ENCODE measurements at regions of chr6 and their contacts with region 1.

Region 1: GRCh38 chr6:31952140-31952805 is 6.4 kb downstream of the CFB start:
- DNase-seq: peak in 8 of 10 donors; percentile 31 to 93 (median 56)

Region 2: DNA sequence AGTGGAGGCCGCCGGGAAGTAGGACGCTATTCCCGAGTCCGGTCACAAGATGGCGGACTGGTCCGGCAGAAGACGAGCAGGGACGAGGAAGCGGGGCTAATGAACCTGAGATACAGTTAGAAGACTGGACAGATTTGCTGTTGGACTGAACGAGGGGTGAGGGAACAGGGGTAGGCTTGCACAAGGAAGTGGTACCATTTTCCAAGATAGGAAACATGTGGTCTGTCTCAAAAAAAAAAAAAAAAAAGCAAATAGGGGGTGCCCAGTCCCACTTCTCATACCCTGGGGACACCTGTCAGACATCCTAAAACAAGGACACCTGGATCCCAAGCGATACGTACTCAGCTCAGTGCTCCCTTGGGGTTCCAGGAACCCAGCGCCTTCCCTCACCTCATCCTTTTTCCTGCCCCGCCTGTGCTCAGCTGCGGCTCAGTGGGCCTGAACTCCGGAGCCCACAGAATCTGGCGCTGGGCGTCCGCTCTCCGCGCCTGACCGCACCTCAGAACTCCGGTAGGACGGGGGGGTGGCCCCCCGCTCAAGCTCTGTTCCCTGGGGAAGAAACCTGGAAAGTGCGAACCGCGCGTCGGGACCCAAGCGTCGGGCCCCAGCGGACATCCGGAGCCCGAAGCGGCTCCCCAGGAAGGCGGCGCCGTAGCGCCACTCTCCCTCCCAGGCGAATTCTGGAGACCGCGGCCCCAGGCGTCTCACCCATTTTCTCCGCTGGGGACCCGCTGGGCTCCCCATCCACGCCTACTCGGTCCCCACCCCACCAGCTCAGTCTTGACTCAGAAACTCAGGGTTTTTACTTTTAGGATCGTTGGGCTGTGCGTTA is 271.2 kb before region 1 on chr6 and contains the start of gene LY6G5C:
- intact Hi-C with region 1: loop called (anchors 5 kb)
- DNase-seq: peak; percentile 65 to 97 (median 81)

Region 3: DNA sequence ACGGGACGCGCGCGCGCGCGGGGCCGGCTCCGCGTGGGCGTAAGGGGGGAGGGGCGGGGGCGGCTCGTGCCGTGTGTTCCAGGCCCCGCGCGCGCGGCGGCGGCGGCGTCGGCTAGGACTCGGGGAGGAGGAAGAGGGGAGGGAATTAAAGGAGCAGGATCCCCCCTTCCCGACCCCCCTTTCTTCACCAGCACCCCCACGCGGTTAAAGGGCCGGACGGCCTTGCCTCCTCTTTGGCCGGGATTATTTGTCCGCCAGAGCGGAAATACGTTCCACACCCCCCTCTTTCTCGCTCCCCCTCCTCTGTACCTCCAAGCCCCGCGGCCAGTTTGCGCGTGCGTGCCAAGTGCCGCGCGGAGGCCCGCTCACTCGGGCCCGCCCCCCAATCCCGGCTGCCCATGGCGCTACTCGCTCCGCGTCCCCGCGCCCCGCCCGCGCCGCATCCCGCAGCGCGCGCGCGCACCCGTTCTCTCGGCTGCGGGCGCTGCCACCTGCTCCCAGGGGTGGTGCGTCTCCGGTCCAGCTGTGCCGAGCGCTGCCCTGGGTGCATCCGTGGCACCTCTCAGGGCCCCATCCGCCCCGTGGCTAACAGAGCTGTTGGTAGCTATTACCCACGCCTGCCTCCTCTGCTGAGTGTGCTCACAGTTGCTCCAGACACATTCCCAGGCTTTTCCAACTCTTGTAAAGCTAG is 50.2 kb before region 1 on chr6 and contains the start of gene ZBTB12:
- intact Hi-C with region 1: loop called (anchors 5 kb)
- DNase-seq: peak; percentile 92 to 99 (median 94)